ENCODE measurements at regions of chrX and their contacts with region 1.

Region 1: GRCh38 chrX:130268500-130269170 is at the start of gene ZNF280C:
- DNase-seq: peak; percentile 86 to 92 (median 91)
- ATAC-seq: peak; percentile 95 to 99 (median 98)
- H3K4me3 ChIP-seq: peak within 1 kb of the TSS; percentile 34 to 89 (median 66)
- H3K27ac ChIP-seq: peak within 1 kb of the TSS in 11 of 12 donors; percentile 32 to 83 (median 76)
- H3K4me1 ChIP-seq: peaks cover 0 to 9% (median 0%) of the 10 kb centered on the region in 12 donors
- H3K27me3 ChIP-seq: peaks cover 0 to 3% (median 0%) of the 10 kb centered on the region in 9 donors
- CTCF ChIP-seq: peak in 6 of 12 donors; percentile 4 to 45 (median 20)
- POLR2A ChIP-seq: peak in 1 of 2 donors; percentile 71
- total RNA-seq, gene ZNF280C: 1.3 to 2.6 (median 1.8) TPM

Region 2: GRCh38 chrX:130339408-130340222 is 71.0 kb after region 1 on chrX and contains the start of gene SLC25A14:
- intact Hi-C with region 1: loop called in 1 of 10 experiments (anchors 5 kb)
- DNase-seq: peak; percentile 63 to 85 (median 75)
- ATAC-seq: peak; percentile 75 to 96 (median 91)
- H3K4me3 ChIP-seq: peak within 1 kb of the TSS; percentile 40 to 85 (median 70)
- H3K27ac ChIP-seq: peak within 1 kb of the TSS in 9 of 12 donors; percentile 18 to 59 (median 46)
- H3K4me1 ChIP-seq: peaks cover 0 to 4% (median 0%) of the 10 kb centered on the region in 12 donors
- H3K27me3 ChIP-seq: no peaks in the 10 kb centered on the region
- CTCF ChIP-seq: no peak
- POLR2A ChIP-seq: peak in 1 of 2 donors; percentile 22
- total RNA-seq, gene SLC25A14: 5.7 to 10.6 (median 7.0) TPM